IMR-90 (cell line): ENCODE measurements at regions of chr9 and their contacts with region 1.

Region 1: GRCh38 chr9:125746017-125746773 is 978 bp upstream of the PBX3 start:
- DNase-seq: peak; percentile 86
- ATAC-seq: peak; percentile 87
- H3K4me3 ChIP-seq: peak overlapping the region; percentile 99
- H3K27ac ChIP-seq: peak overlapping the region; percentile 59; the same call in 1 of the 2 replicates
- H3K4me1 ChIP-seq: peaks cover 6% of the 10 kb centered on the region
- H3K27me3 ChIP-seq: no peaks in the 10 kb centered on the region
- CTCF ChIP-seq: no peak
- POLR2A ChIP-seq: no peak
- RAD21 ChIP-seq: no peak

Region 2: DNA sequence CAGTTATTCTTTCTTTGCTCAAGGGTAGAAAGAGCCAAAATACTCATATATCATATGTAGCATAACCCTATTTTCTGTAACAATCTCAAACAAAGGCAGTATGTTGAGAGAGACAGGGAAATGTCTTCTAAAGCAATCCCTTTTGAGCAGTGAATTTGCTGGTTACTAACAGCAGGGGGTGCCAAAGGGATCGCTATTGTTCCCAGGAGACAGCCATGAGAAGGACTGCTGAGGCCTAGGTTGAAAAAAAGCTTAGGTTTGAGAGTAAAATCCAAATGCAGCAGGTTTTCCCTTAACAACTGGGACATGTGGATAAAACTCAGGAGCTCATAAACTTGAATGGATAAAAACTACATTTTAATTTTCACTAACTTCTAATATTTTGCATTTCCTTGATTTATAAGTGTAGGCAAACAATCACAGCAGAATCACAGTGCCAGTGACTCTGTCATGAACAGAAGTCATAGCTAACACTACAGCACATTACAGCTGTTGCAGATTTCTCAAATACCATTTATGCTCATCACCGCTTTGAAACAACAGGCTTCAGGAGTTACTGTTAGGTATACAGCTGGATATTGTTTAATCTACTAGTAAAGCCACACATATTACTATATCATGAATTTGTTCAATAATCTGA is 187.6 kb before region 1 on chr9:
- CTCF ChIA-PET with region 1: no interaction called
- POLR2A ChIA-PET with region 1: no interaction called
- dilution Hi-C with region 1: no loop called
- in situ Hi-C with region 1: no loop called
- intact Hi-C with region 1: loop called (anchors 2 kb)
- DNase-seq: peak; percentile 83
- ATAC-seq: peak; percentile 88
- H3K4me3 ChIP-seq: no peak overlapping the region
- H3K27ac ChIP-seq: no peak overlapping the region; the same call in 1 of the 2 replicates
- H3K4me1 ChIP-seq: peaks cover 3% of the 10 kb centered on the region
- H3K27me3 ChIP-seq: no peaks in the 10 kb centered on the region
- CTCF ChIP-seq: peak; percentile 77
- POLR2A ChIP-seq: no peak
- RAD21 ChIP-seq: peak; percentile 85

Region 3: DNA sequence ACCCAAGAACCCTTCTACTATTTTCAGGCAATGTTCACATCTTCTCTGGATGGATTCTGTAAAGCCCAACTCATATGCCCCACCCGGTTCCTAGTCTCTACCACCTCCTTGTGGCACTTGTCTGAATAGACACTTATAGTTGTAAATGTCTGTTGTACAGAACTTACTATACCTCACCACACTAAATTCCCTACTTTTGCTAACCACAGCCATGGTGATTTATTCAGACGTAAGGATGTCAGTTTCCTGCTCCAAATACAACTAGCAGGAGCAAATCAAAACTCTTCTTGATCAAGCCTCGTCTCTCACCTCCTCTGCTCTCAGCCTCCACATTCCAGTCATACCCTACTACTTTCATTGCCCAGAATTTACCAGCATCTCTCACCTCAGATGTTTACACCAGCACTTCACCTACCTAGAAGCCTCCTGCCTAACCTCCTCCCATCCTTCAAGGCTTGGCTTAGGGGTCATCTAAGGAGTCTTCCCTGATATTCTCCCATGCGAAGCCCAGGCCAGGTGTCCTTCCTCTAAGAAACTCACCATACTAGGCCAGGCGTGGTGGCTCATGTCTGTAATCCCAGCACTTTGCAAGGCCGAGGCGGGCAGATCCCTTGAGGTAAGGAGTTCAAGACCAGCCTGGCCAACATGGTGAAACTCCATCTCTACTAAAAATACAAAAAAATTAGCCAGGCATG is 114.7 kb before region 1 on chr9:
- CTCF ChIA-PET with region 1: no interaction called
- POLR2A ChIA-PET with region 1: no interaction called
- dilution Hi-C with region 1: no loop called
- in situ Hi-C with region 1: no loop called
- intact Hi-C with region 1: no loop called
- DNase-seq: peak; percentile 57
- ATAC-seq: peak; percentile 85
- H3K4me3 ChIP-seq: no peak overlapping the region
- H3K27ac ChIP-seq: no peak overlapping the region
- H3K4me1 ChIP-seq: peaks cover 7% of the 10 kb centered on the region
- H3K27me3 ChIP-seq: no peaks in the 10 kb centered on the region
- CTCF ChIP-seq: peak; percentile 64
- POLR2A ChIP-seq: no peak
- RAD21 ChIP-seq: peak; percentile 80

Region 4: GRCh38 chr9:125889476-125890419 is 143.6 kb after region 1 on chr9:
- CTCF ChIA-PET with region 1: no interaction called
- POLR2A ChIA-PET with region 1: no interaction called
- dilution Hi-C with region 1: no loop called
- in situ Hi-C with region 1: no loop called
- intact Hi-C with region 1: loop called (anchors 5 kb)
- DNase-seq: peak; percentile 52
- ATAC-seq: peak; percentile 77
- H3K4me3 ChIP-seq: peak overlapping the region; percentile 94
- H3K27ac ChIP-seq: no peak overlapping the region; the same call in 1 of the 2 replicates
- H3K4me1 ChIP-seq: peaks cover 8% of the 10 kb centered on the region
- H3K27me3 ChIP-seq: no peaks in the 10 kb centered on the region
- CTCF ChIP-seq: no peak
- POLR2A ChIP-seq: no peak
- RAD21 ChIP-seq: no peak

Region 5: DNA sequence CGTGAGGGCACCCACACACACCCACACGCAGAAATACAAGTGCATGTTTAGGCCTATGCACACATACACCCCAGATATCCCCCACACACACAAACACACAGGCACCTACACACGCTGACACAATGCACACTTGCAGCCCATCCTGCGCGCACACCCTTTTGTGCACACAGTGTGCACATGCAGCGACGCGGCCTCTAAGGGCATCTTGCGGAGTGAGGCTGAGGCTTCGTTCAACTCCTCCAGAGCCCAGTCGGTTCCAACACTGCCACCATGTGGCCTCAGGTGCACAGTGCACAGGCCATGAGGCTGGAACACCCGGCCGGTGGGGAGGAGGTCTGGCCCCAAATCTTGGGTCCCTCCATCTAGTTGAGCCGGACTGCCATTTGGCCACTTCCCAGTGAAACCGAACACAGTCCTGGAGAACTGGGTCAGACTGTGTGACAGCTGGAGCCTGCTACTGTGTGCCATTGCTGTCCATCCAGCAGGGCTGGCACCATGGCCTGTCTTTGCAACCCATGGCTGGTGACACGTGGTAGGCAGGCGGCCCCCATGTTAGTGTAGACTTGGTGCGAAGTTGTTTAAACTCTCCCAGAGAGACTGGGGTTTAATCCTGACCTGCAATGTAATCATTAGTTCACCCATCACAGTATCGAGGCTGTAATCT is 482.7 kb after region 1 on chr9:
- CTCF ChIA-PET with region 1: no interaction called
- POLR2A ChIA-PET with region 1: no interaction called
- dilution Hi-C with region 1: no loop called
- in situ Hi-C with region 1: no loop called
- intact Hi-C with region 1: loop called (anchors 5 kb)
- DNase-seq: peak; percentile 57
- ATAC-seq: peak; percentile 100
- H3K4me3 ChIP-seq: no peak overlapping the region
- H3K27ac ChIP-seq: no peak overlapping the region
- H3K4me1 ChIP-seq: no peaks in the 10 kb centered on the region
- H3K27me3 ChIP-seq: peaks cover 58% of the 10 kb centered on the region
- CTCF ChIP-seq: peak; percentile 88
- POLR2A ChIP-seq: no peak
- RAD21 ChIP-seq: peak; percentile 91